CD8-positive, alpha-beta T cell (primary cell): ENCODE measurements at regions of chr2 and their contacts with region 1.

Region 1: DNA sequence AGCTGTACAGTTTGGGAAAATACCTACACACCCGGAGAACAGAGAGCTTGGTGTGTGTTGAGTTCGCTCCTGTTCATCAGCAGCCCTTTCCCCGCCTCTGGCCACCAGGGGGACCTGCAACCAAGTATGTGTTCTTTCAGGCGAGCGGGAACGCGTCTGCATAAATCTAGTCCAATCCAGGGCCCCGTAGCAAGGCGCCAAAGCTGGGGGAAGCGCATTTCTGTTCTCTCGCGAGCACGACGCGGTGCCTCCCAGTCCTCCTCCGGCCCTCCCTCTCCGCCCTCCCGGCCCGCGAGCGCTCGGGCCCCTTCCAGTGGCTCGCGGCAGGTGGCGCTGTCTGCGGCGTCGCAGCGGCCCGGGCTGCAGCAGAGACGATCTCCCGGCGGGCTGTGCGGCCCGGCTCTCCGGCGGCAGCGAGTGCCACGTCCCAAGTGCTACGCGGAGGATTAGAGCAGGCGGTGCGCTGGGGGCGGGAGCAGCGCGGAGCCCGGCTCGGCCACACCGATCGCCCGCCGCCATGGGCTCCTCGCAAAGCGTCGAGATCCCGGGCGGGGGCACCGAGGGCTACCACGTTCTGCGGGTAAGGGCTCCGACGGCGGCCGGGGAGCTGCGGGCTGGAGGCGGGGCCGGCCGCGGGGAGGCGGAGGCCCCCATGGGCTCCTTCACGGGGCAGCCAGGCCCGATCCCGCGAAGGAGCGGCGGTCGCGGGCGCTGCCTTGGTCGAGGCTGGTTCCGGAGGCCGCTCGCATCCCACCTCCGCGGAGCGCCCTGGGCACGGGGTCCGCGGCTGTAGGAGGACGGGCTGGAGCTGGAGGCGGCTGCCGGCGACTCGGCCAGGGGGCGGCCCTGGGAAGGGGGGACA is at the start of gene GORASP2:
- DNase-seq: peak; percentile 93 to 100 (median 97)
- ATAC-seq: peak; percentile 90
- H3K4me3 ChIP-seq: peak within 1 kb of the TSS; percentile 78 to 92
- H3K4me3 Mint-ChIP-seq: peak within 1 kb of the TSS; percentile 98
- H3K27ac ChIP-seq: peak within 1 kb of the TSS; percentile 68 to 80
- H3K27ac Mint-ChIP-seq: peak within 1 kb of the TSS; percentile 97
- H3K4me1 ChIP-seq: peaks cover 30% of the 10 kb centered on the region
- H3K4me1 Mint-ChIP-seq: peaks cover 35% of the 10 kb centered on the region
- H3K27me3 ChIP-seq: no peaks in the 10 kb centered on the region
- H3K27me3 Mint-ChIP-seq: no peaks in the 10 kb centered on the region
- CTCF ChIP-seq: peak; percentile 93
- total RNA-seq, gene GORASP2: 111 to 112 TPM

Region 2: GRCh38 chr2:169584005-169584877 is 1344.8 kb before region 1 on chr2 and contains the start of gene PPIG:
- CTCF ChIA-PET with region 1: no interaction called
- POLR2A ChIA-PET with region 1: no interaction called
- intact Hi-C with region 1: loop called in 1 of 2 experiments (anchors 10 kb)
- DNase-seq: peak; percentile 74 to 97 (median 88)
- ATAC-seq: peak; percentile 91
- H3K4me3 ChIP-seq: peak within 1 kb of the TSS; percentile 85 to 100
- H3K4me3 Mint-ChIP-seq: peak within 1 kb of the TSS; percentile 97
- H3K27ac ChIP-seq: peak within 1 kb of the TSS; percentile 97 to 98
- H3K27ac Mint-ChIP-seq: peak within 1 kb of the TSS; percentile 100
- H3K4me1 ChIP-seq: peaks cover 25% of the 10 kb centered on the region
- H3K4me1 Mint-ChIP-seq: peaks cover 39% of the 10 kb centered on the region
- H3K27me3 ChIP-seq: no peaks in the 10 kb centered on the region
- H3K27me3 Mint-ChIP-seq: no peaks in the 10 kb centered on the region
- CTCF ChIP-seq: no peak
- total RNA-seq, gene PPIG: 89.8 to 104 TPM

Region 3: GRCh38 chr2:170940066-170940465 is 11.0 kb after region 1 on chr2:
- CTCF ChIA-PET with region 1: interaction called, 11 read pairs
- POLR2A ChIA-PET with region 1: interaction called, 4 read pairs
- intact Hi-C with region 1: no loop called
- DNase-seq: no peak
- ATAC-seq: no peak
- H3K4me3 ChIP-seq: no peak overlapping the region
- H3K4me3 Mint-ChIP-seq: no peak overlapping the region
- H3K27ac ChIP-seq: no peak overlapping the region
- H3K27ac Mint-ChIP-seq: peak overlapping the region; percentile 39
- H3K4me1 ChIP-seq: peaks cover 23% of the 10 kb centered on the region
- H3K4me1 Mint-ChIP-seq: peaks cover 82% of the 10 kb centered on the region
- H3K27me3 ChIP-seq: no peaks in the 10 kb centered on the region
- H3K27me3 Mint-ChIP-seq: no peaks in the 10 kb centered on the region
- CTCF ChIP-seq: no peak

Region 4: GRCh38 chr2:171086352-171087290 is 157.6 kb after region 1 on chr2:
- CTCF ChIA-PET with region 1: interaction called, 4 read pairs
- POLR2A ChIA-PET with region 1: no interaction called
- intact Hi-C with region 1: loop called (anchors 5 kb)
- DNase-seq: peak; percentile 27 to 78 (median 57)
- ATAC-seq: peak; percentile 72
- H3K4me3 ChIP-seq: peak overlapping the region; percentile 4 to 39
- H3K4me3 Mint-ChIP-seq: peak overlapping the region; percentile 80
- H3K27ac ChIP-seq: peak overlapping the region; percentile 7 to 39
- H3K27ac Mint-ChIP-seq: peak overlapping the region; percentile 95
- H3K4me1 ChIP-seq: peaks cover 57% of the 10 kb centered on the region
- H3K4me1 Mint-ChIP-seq: peaks cover 66% of the 10 kb centered on the region
- H3K27me3 ChIP-seq: no peaks in the 10 kb centered on the region
- H3K27me3 Mint-ChIP-seq: no peaks in the 10 kb centered on the region
- CTCF ChIP-seq: peak; percentile 80

Region 5: GRCh38 chr2:171433763-171434670 is 505.0 kb after region 1 on chr2 and contains the starts of genes DCAF17 and METTL8:
- CTCF ChIA-PET with region 1: interaction called, 9 read pairs
- POLR2A ChIA-PET with region 1: interaction called, 24 read pairs
- intact Hi-C with region 1: loop called (anchors 1 kb)
- DNase-seq: peak; percentile 84 to 97 (median 93)
- ATAC-seq: peak; percentile 91
- H3K4me3 ChIP-seq: peak within 1 kb of the TSS; percentile 79 to 93
- H3K4me3 Mint-ChIP-seq: peak within 1 kb of the TSS; percentile 91
- H3K27ac ChIP-seq: peak within 1 kb of the TSS; percentile 80 to 97
- H3K27ac Mint-ChIP-seq: peak within 1 kb of the TSS; percentile 96
- H3K4me1 ChIP-seq: peaks cover 12% of the 10 kb centered on the region
- H3K4me1 Mint-ChIP-seq: peaks cover 47% of the 10 kb centered on the region
- H3K27me3 ChIP-seq: no peaks in the 10 kb centered on the region
- H3K27me3 Mint-ChIP-seq: no peaks in the 10 kb centered on the region
- CTCF ChIP-seq: peak; percentile 12
- total RNA-seq, gene DCAF17: 12.5 to 12.9 TPM
- total RNA-seq, gene METTL8: 6.2 to 7.7 TPM

Region 6: DNA sequence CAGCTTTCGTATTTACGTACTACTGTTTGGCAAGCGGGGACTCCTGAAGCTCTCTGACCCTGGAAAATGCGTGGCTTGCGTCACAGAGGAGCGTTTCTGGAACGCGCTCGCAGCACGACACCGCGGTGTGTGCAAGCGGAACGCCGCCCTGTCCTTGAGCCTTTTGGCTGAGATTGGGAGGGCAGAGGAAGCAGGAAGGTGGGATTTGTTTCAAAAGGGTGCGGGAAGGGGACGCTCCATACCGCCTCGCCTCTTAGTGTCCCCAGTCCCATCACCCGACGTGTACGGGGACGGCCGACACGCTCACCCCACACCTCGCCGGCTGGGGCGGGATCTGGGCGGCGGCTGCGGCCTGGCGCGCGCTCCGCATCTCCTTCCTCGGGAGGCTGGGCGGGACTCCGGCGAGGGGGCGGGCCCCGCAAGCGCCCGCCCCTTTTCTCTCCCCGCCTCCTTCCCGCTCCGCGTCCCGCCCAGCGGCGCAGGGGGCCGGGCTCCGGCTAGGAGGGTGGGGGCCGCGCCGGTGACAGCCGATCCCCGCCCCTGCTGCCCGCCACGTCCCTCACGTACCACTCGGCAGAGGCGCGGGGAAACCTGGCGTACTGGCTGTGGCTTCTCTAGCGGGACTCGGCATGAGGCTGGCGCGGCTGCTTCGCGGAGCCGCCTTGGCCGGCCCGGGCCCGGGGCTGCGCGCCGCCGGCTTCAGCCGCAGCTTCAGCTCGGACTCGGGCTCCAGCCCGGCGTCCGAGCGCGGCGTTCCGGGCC is 1626.6 kb after region 1 on chr2 and contains the start of gene PDK1:
- CTCF ChIA-PET with region 1: no interaction called
- POLR2A ChIA-PET with region 1: no interaction called
- intact Hi-C with region 1: loop called (anchors 2 to 5 kb)
- DNase-seq: peak; percentile 81 to 95 (median 90)
- ATAC-seq: peak; percentile 92
- H3K4me3 ChIP-seq: peak within 1 kb of the TSS; percentile 77 to 98
- H3K4me3 Mint-ChIP-seq: peak within 1 kb of the TSS; percentile 94
- H3K27ac ChIP-seq: peak within 1 kb of the TSS; percentile 66 to 82
- H3K27ac Mint-ChIP-seq: peak within 1 kb of the TSS; percentile 86
- H3K4me1 ChIP-seq: peaks cover 33% of the 10 kb centered on the region
- H3K4me1 Mint-ChIP-seq: peaks cover 49% of the 10 kb centered on the region
- H3K27me3 ChIP-seq: no peaks in the 10 kb centered on the region
- H3K27me3 Mint-ChIP-seq: no peaks in the 10 kb centered on the region
- CTCF ChIP-seq: no peak
- total RNA-seq, gene PDK1: 34.1 to 36.6 TPM